Left cardiac atrium (tissue), 4 donors: ENCODE measurements at regions of chr18 and their contacts with region 1.

Region 1: GRCh38 chr18:50649821-50650220 is 89.9 kb downstream of the MAPK4 start:
- DNase-seq: peak; percentile 79
- ATAC-seq: peak; percentile 87 to 92

Region 2: DNA sequence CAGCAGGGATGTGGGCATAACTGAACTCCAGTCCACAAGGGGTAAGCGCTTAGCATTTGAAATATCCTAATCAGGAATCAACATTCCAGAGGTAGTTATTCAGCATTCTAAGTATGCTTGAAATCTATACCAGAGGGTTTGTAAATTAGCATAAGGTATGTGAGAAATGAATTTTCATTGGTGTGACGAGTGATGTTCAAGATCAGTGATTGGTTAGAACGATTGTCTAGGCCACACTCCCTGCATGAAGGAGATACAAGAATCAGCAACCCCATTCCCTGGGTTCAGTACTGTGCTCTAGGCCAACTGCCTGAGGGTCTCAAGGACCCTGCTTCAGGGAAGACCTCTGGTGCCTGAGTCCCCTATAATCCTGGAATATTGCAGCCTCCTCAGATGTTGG is 47.3 kb before region 1 on chr18:
- intact Hi-C with region 1: no loop called
- DNase-seq: no peak
- ATAC-seq: no peak

Region 3: DNA sequence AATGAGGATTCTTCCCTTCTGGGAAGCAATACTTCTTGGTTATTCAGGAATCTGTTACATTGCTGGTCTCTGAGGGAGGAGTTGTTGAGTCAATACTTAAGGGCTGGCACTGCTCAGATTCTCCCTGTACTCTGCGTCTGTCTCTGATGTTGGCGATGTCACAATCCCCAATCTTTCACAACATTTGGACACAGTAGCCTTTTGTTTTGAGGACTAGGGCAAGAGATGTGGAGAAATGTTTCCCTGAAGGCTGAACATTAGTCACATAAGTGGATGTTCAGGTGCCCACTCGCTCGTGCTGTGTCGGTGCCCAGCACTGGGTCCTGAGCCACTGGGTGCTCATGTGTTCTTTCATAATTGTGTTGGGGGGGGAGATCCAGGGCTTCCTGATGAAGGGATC is 35.0 kb before region 1 on chr18:
- intact Hi-C with region 1: loop called in 1 of 2 experiments (anchors 5 kb)
- DNase-seq: no peak
- ATAC-seq: peak; percentile 38 to 86

Region 4: GRCh38 chr18:51135795-51136194 is 486.0 kb after region 1 on chr18:
- intact Hi-C with region 1: no loop called
- DNase-seq: no peak
- ATAC-seq: no peak

Region 5: GRCh38 chr18:51330148-51330547 is 680.3 kb after region 1 on chr18:
- intact Hi-C with region 1: no loop called
- DNase-seq: no peak
- ATAC-seq: no peak

Region 6: DNA sequence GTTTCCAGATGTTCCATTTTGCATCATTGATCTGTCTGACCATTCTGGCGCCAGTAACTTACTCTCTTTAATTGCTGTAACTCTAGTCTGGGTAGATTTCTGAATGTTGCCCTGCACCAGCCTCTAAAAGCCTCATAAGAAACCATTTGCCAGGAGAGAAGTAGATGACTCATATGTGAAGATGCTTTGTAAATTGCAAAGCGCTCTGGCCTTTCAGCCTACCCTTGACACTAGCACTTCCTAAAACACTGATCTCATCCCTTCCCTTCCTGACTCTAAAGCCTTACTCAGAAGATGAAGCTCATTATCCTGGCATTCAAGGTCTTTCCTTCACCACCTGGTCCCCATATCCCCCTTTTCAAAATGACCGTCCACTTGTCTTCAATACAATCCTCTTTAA is 740.9 kb after region 1 on chr18:
- intact Hi-C with region 1: no loop called
- DNase-seq: no peak
- ATAC-seq: no peak